A673 (cell line): ENCODE measurements at regions of chr6 and their contacts with region 1.

Region 1: GRCh38 chr6:28355743-28356665 is 6.3 kb downstream of the ZKSCAN3 start:
- DNase-seq: peak; percentile 95
- H3K4me3 ChIP-seq: peak overlapping the region; percentile 58
- H3K27ac ChIP-seq: peak overlapping the region; percentile 48
- H3K4me1 ChIP-seq: peaks cover 8% of the 10 kb centered on the region
- H3K27me3 ChIP-seq: no peaks in the 10 kb centered on the region
- CTCF ChIP-seq: peak; percentile 70

Region 2: GRCh38 chr6:27567216-27567615 is 788.8 kb before region 1 on chr6:
- CTCF ChIA-PET with region 1: no interaction called
- POLR2A ChIA-PET with region 1: interaction called, 24 read pairs
- intact Hi-C with region 1: no loop called
- DNase-seq: no peak
- H3K4me3 ChIP-seq: no peak overlapping the region
- H3K27ac ChIP-seq: no peak overlapping the region
- H3K4me1 ChIP-seq: no peaks in the 10 kb centered on the region
- H3K27me3 ChIP-seq: peaks cover 29% of the 10 kb centered on the region
- CTCF ChIP-seq: no peak